Mammary epithelial cell (primary cell): ENCODE measurements at regions of chr12 and their contacts with region 1.

Region 1: DNA sequence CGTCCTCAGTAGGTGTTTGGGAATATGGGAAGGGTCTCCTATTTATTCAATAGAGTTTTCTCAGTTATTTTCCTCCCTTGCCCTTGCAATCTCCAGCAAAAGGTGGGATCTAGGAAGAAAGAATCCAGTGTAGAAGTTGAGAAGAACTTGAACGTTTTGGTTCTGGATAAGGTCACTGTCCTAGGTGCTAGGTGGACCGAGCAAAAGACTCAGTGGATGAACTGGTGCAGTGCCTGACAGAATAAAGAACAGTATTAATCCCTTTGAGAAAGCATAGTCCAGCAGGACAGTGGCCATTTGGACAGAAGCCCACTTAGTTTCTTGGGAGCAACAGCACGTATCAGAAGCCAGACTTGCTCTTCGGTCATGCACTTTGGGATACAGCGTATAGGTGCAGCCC is 32.7 kb upstream of the LRTM2 start:
- DNase-seq: no peak
- H3K4me3 ChIP-seq: no peak overlapping the region
- H3K27ac ChIP-seq: no peak overlapping the region
- H3K4me1 ChIP-seq: no peaks in the 10 kb centered on the region
- H3K27me3 ChIP-seq: no peaks in the 10 kb centered on the region
- CTCF ChIP-seq: no peak

Region 2: GRCh38 chr12:1099158-1099557 is 688.6 kb before region 1 on chr12:
- CTCF ChIA-PET with region 1: no interaction called
- dilution Hi-C with region 1: no loop called
- in situ Hi-C with region 1: no loop called
- intact Hi-C with region 1: no loop called
- DNase-seq: no peak
- H3K4me3 ChIP-seq: no peak overlapping the region
- H3K27ac ChIP-seq: no peak overlapping the region
- H3K4me1 ChIP-seq: peaks cover 3% of the 10 kb centered on the region
- H3K27me3 ChIP-seq: no peaks in the 10 kb centered on the region
- CTCF ChIP-seq: no peak

Region 3: GRCh38 chr12:1650260-1650977 is 137.3 kb before region 1 on chr12:
- CTCF ChIA-PET with region 1: interaction called, 29 read pairs
- dilution Hi-C with region 1: loop called (anchors 25 kb)
- in situ Hi-C with region 1: loop called (anchors 5 kb)
- intact Hi-C with region 1: loop called (anchors 1 kb)
- DNase-seq: no peak
- H3K4me3 ChIP-seq: no peak overlapping the region
- H3K27ac ChIP-seq: no peak overlapping the region
- H3K4me1 ChIP-seq: no peaks in the 10 kb centered on the region
- H3K27me3 ChIP-seq: no peaks in the 10 kb centered on the region
- CTCF ChIP-seq: no peak